Heart right ventricle (tissue), 16 donors: ENCODE measurements at regions of chr11 and their contacts with region 1.

Region 1: DNA sequence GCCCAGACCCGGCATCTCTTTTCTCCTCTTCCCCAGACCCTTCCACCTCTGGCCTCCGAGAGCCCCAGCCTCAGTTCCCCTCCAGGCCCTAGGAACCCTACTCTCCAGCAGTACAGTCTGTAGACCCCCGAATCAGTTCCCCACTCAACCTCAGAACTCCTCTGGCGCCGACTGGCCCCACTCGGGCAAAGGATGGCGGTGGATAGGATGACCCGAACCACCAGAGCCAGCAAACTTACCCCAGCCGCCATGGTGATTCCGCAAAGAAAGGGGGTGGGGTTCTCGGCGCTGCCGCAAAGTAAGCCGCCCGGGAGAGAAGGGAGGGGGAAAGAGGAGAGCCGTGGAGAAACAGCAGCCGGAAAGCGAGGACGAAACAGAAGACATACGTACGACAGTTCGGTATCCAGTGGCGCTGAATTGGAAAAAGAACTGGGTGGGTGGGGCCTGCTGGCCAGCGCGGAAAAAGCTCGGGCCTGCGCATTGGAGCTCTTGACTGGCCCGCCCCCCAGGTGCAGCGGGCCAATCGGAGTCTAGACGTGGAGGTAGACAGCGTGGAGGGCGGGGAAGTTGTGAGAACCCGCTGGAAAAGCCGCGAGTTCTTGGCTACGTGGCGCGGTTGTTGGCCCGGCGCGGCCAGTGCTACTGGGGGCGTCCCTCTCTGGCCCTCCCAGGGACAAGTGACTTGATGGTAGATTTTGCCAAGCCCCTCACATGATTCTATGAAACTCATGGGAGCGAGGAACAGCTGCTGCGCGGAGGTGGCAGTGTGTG is at the start of gene EEF1G:
- DNase-seq: peak; percentile 97 to 100
- ATAC-seq: peak; percentile 95 to 97 (median 96)
- H3K4me3 ChIP-seq: peak within 1 kb of the TSS; percentile 71 to 95 (median 85)
- H3K27ac ChIP-seq: peak within 1 kb of the TSS; percentile 81 to 98 (median 92)
- H3K4me1 ChIP-seq: peaks cover 11 to 79% (median 54%) of the 10 kb centered on the region in 9 donors
- H3K27me3 ChIP-seq: no peaks in the 10 kb centered on the region
- CTCF ChIP-seq: no peak
- total RNA-seq, gene EEF1G: 784 to 1,131 (median 1,002) TPM

Region 2: DNA sequence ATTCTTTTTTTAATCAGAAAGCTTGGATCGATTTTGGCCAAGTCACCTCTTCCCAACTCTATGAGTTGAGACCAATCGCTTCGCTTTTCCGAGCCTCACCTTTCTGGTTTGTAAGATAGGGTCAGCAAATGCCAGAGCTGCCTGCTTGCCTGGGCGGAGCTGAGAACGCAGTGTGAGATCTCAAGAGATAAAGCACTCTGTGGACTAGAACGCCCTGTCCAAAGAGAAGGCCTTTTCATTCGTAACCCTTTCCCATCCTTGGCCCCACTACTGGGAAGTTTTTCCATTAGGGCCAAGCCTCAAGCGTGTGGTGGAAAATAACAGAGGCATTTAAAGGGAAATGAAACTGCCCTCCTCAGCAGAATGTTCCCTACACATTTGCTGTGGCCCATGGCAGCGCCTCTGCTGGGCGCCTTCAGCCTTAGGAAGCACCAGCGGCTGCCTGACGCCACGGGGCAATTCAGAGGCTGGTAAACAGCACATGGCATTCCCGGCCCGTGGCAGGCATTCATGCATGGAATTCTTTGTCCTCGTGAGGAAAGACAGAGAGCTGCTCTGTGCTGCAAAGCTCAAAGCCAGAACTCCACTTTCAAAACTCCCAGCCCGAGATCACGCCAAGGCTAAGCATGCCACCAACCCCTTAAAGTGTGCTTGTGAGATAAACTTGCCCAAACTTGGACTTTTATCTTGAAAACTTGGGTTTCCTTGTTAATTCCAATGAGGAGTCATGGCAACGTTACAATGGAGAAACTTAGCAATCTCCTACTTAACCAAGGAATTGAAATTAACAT is 65.3 kb before region 1 on chr11:
- intact Hi-C with region 1: no loop called
- DNase-seq: peak; percentile 76 to 80
- ATAC-seq: peak; percentile 78 to 93 (median 89)
- H3K4me3 ChIP-seq: peak overlapping the region in 4 of 10 donors; percentile 19 to 29 (median 21)
- H3K27ac ChIP-seq: peak overlapping the region; percentile 1 to 89 (median 76)
- H3K4me1 ChIP-seq: peaks cover 7 to 67% (median 45%) of the 10 kb centered on the region in 9 donors
- H3K27me3 ChIP-seq: no peaks in the 10 kb centered on the region
- CTCF ChIP-seq: peak; percentile 6 to 71 (median 45)

Region 3: DNA sequence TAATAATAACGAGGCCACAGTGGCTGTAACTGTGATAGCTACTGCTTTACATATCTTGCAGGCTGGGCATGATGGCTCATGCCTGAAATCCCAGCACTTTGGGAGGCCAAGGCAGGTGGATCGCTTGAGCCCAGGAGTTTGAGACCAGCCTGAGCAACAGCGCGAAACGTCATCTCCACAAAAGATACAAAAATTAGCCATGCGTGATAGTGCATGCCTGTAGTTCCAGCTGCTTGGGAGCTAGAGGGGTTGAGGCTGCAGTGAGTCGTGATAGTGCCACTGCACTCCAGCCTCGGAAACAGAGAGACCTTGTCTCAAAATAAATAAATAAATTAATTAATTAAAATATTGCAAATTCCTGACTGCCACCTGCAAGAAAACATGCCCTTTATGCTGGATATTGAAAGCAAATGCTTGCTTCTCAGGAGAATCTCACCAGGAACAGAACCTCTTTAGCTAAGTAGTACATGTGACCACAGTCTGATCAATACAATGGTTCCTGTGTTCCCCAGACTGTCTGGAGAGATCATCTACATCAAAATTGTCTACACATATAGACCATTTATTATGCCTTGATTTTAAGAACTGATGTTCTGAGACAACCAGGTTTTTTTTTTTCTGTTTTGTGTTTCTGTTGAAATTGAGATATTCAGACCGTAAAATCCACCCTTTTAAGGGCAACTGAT is 173.8 kb after region 1 on chr11:
- intact Hi-C with region 1: no loop called
- DNase-seq: no peak
- ATAC-seq: no peak
- H3K4me3 ChIP-seq: no peak overlapping the region
- H3K27ac ChIP-seq: no peak overlapping the region
- H3K4me1 ChIP-seq: peaks cover 0 to 27% (median 11%) of the 10 kb centered on the region in 9 donors
- H3K27me3 ChIP-seq: no peaks in the 10 kb centered on the region
- CTCF ChIP-seq: no peak

Region 4: DNA sequence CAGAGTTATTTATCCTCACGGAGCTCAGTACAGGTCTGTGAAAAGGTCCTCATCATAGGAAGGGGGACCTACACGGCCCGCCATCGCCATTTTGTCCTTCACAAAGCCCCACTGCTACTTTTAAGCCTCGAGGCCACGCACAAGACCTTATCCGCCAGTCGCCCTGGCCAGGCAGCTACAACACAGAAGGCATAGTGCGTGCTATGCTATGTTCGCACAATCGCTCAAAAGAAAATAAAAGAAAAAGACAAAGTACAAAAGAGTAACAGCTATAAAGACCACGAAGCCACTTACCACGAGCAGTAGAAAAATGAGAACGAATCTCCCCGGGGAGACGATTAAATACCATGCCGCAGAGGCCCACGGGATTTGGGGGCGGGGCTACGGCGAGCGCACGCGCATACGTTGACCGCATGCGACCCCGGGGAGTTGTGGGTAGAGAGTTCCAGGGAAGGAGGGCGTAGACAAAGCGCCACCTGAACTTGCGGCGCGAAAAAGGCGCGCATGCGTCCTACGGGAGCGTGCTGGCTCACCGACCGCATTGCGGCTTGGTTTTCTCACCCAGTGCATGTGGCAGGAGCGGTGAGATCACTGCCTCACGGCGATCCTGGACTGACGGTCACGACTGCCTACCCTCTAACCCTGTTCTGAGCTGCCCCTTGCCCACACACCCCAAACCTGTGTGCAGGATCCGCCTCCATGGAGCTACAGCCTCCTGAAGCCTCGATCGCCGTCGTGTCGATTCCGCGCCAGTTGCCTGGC is 282.0 kb after region 1 on chr11:
- intact Hi-C with region 1: loop called in 1 of 10 experiments (anchors 10 kb)
- DNase-seq: peak; percentile 96
- ATAC-seq: peak; percentile 97 to 99 (median 99)
- H3K4me3 ChIP-seq: peak overlapping the region; percentile 51 to 98 (median 68)
- H3K27ac ChIP-seq: peak overlapping the region; percentile 1 to 88 (median 77)
- H3K4me1 ChIP-seq: peaks cover 12 to 49% (median 29%) of the 10 kb centered on the region in 9 donors
- H3K27me3 ChIP-seq: no peaks in the 10 kb centered on the region
- CTCF ChIP-seq: no peak